PC-9 (cell line): ENCODE measurements at regions of chr18 and their contacts with region 1.

Region 1: DNA sequence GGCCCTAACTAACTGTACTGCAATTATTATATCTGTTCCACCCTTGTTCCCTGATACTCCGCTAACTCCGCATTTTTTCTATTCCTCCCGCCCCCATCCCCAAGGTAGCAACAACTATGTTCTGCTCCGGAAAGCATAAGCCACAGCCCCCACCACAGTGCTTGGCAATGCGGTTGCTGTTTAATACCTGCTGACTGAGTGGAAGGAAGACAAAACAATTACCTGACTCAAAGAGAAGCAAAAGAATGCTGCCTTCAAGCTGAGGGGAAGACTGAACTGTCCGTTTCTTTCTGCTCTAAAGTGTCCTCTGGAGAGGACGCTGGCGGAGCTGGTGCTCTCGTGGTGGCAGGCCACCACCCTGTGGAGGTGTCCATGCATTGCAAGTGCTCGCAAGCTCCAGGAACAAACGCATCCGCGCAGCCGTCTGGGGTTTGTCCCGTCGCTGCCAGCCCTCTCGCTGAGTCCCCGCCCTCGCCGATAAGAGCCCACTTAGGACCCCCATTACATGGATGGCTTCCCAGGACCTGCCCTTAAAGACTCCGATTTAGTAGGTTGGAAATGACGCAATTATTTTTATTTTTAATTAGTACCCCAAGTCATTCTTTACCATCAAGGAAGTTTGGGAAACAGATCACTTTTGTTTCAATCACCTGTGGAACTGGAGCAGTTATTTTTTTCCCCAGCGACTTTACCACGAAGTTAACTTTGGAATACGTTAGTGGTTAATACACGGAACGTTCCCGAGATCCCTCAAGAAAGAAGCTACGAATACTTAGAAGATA is 1.6 kb upstream of the MYL12A start:
- DNase-seq: peak; percentile 79 to 88
- H3K4me3 ChIP-seq: peak overlapping the region; percentile 86
- H3K27ac ChIP-seq: peak overlapping the region; percentile 87
- H3K4me1 ChIP-seq: peaks cover 32% of the 10 kb centered on the region
- H3K27me3 ChIP-seq: no peaks in the 10 kb centered on the region
- CTCF ChIP-seq: peak; percentile 96

Region 2: GRCh38 chr18:2774669-2775068 is 471.4 kb before region 1 on chr18:
- CTCF ChIA-PET with region 1: no interaction called
- POLR2A ChIA-PET with region 1: no interaction called
- intact Hi-C with region 1: loop called (anchors 5 kb)
- DNase-seq: no peak
- H3K4me3 ChIP-seq: no peak overlapping the region
- H3K27ac ChIP-seq: no peak overlapping the region
- H3K4me1 ChIP-seq: no peaks in the 10 kb centered on the region
- H3K27me3 ChIP-seq: no peaks in the 10 kb centered on the region
- CTCF ChIP-seq: no peak

Region 3: DNA sequence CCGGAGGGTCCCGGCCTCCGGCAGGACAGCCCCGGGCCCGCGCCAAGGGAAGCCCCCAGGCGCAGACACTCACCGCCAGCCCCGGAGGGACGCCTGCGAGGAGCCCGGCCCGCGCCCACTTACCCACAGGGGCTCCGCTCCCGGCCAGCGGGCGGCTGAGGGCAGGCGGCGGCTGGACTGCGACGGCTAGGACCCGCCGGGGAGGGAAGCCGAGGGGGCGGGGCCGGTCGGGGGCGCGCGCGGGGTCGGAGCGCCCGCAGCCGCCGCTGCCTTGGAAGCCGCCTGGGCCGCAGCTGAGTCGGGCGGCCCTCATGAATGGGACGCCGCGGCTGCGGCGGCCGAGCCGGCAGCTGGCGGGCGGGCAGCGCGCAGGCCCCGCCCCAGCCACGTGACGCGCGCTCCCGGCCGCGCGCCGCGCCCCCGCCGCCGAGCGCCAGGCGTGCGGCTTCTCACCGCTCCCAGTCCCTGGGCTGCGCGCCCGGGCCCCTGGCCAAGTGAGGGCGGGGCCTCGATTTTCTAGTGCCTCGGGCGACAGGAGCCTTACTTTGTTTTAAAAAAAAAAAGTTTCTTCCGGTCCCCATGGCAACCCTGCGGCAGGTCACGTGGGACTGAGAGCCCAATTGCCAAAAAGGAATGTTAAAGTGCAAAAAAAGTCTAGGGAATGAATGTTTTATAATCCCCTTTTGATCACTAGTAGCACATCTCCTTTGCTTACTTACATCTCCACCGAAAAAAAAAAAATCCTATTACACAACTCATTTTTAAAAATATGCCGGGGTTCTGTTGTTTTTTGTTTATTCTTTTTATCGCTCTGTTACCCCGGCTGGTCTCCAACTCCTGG is 232.9 kb before region 1 on chr18 and contains the start of gene LPIN2:
- CTCF ChIA-PET with region 1: interaction called, 6 read pairs
- POLR2A ChIA-PET with region 1: interaction called, 5 read pairs
- intact Hi-C with region 1: loop called (anchors 1 kb)
- DNase-seq: peak; percentile 88 to 100
- H3K4me3 ChIP-seq: peak within 1 kb of the TSS; percentile 77
- H3K27ac ChIP-seq: peak within 1 kb of the TSS; percentile 99
- H3K4me1 ChIP-seq: peaks cover 49% of the 10 kb centered on the region
- H3K27me3 ChIP-seq: no peaks in the 10 kb centered on the region
- CTCF ChIP-seq: no peak
- total RNA-seq, gene LPIN2: 13.3 and 15.0 TPM in 2 replicates

Region 4: DNA sequence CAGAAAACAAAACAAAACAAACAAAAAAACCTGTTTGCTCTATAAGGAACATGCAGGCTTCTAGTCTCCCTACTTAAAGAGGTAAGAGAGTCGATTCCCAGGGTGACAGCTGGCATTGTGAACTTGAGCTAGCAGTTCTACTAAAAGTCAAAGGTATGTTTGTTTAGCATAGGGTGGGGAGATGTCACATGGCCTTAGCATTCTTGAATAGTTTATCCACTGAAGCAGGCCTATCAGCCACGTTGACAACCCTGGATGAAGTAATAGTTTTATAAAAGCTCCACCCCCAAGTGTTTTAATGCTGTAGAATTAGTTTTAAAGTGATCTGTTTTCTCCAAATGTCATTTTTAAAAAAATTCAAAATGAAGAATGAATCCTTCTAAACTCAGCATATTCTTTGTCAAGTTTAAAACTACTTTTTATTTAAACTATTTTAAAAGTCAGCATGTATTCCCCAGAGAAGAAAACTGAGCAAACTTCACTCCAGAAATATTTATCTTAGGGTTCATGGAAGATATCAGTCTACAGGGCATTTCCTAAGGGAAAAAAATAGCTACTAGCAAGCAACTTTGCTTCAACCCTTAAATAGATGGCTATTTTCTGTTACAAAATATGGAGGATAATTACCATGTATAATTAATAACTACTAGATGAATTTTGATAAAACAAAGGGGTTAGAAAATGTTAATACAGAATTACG is 27.9 kb before region 1 on chr18:
- CTCF ChIA-PET with region 1: interaction called, 3 read pairs
- POLR2A ChIA-PET with region 1: interaction called, 12 read pairs
- intact Hi-C with region 1: loop called (anchors 1 kb)
- DNase-seq: peak; percentile 38 to 87
- H3K4me3 ChIP-seq: no peak overlapping the region
- H3K27ac ChIP-seq: peak overlapping the region; percentile 45
- H3K4me1 ChIP-seq: peaks cover 18% of the 10 kb centered on the region
- H3K27me3 ChIP-seq: no peaks in the 10 kb centered on the region
- CTCF ChIP-seq: no peak

Region 5: GRCh38 chr18:3269241-3269913 is 23.3 kb after region 1 on chr18:
- CTCF ChIA-PET with region 1: no interaction called
- POLR2A ChIA-PET with region 1: no interaction called
- intact Hi-C with region 1: no loop called
- DNase-seq: no peak
- H3K4me3 ChIP-seq: no peak overlapping the region
- H3K27ac ChIP-seq: no peak overlapping the region
- H3K4me1 ChIP-seq: peaks cover 37% of the 10 kb centered on the region
- H3K27me3 ChIP-seq: no peaks in the 10 kb centered on the region
- CTCF ChIP-seq: no peak

Region 6: DNA sequence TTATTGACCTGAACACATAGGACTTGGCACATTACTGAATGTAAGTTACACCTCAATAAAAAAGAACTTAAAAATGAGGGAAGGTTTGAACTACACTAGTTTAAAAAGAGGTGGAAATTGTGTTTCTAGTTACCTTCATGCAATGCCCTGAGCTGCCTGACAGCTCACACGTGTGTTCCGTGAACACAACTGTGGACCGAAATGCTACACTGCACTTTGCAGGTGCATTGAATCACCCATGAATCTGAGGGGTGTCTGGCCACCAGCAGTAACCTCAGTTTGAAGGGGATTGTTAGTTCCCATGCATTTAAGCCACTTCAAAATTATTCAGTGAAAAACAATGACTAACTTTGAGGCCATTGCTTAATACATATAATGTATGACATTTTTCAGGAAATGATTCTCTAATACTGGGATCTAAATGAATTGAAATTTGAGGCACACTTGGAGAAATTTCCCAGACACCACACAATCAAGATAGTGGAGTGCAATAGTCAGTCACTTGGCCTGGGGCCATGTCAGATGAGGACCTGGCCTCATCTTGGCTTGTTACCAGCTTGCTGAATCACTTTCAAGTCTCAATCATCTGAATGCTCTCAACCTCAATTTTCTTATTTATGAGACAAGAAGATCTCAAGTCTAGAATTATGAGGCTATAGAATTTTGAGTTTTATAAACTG is 75.2 kb after region 1 on chr18:
- CTCF ChIA-PET with region 1: no interaction called
- POLR2A ChIA-PET with region 1: interaction called, 22 read pairs
- intact Hi-C with region 1: no loop called
- DNase-seq: peak; percentile 88 to 93
- H3K4me3 ChIP-seq: no peak overlapping the region
- H3K27ac ChIP-seq: peak overlapping the region; percentile 74
- H3K4me1 ChIP-seq: peaks cover 32% of the 10 kb centered on the region
- H3K27me3 ChIP-seq: no peaks in the 10 kb centered on the region
- CTCF ChIP-seq: no peak

Region 7: GRCh38 chr18:3665780-3666525 is 419.9 kb after region 1 on chr18:
- CTCF ChIA-PET with region 1: interaction called, 3 read pairs
- POLR2A ChIA-PET with region 1: interaction called, 7 read pairs
- intact Hi-C with region 1: loop called (anchors 1 kb)
- DNase-seq: peak; percentile 78 to 89
- H3K4me3 ChIP-seq: peak overlapping the region; percentile 45; the same call in 1 of the 2 replicates
- H3K27ac ChIP-seq: peak overlapping the region; percentile 96
- H3K4me1 ChIP-seq: peaks cover 33% of the 10 kb centered on the region
- H3K27me3 ChIP-seq: no peaks in the 10 kb centered on the region
- CTCF ChIP-seq: peak; percentile 97